Psoas muscle (tissue), 8 donors: ENCODE measurements at regions of chr6 and their contacts with region 1.

Region 1: GRCh38 chr6:26196846-26197648 is 109.8 kb downstream of the HFE start:
- DNase-seq: peak; percentile 55 to 66
- ATAC-seq: peak; percentile 31 to 63 (median 48)
- H3K4me3 ChIP-seq: peak overlapping the region; percentile 67
- H3K27ac ChIP-seq: peak overlapping the region; percentile 76
- H3K4me1 ChIP-seq: peaks cover 8% of the 10 kb centered on the region
- H3K27me3 ChIP-seq: peaks cover 0 to 94% (median 32%) of the 10 kb centered on the region in 3 donors
- CTCF ChIP-seq: no peak

Region 2: GRCh38 chr6:26234421-26235296 is 37.6 kb after region 1 on chr6:
- intact Hi-C with region 1: loop called in 1 of 2 experiments (anchors 5 kb)
- DNase-seq: peak in 1 of 2 donors; percentile 64
- ATAC-seq: peak; percentile 55 to 67 (median 58)
- H3K4me3 ChIP-seq: peak overlapping the region; percentile 64
- H3K27ac ChIP-seq: peak overlapping the region; percentile 51
- H3K4me1 ChIP-seq: peaks cover 19% of the 10 kb centered on the region
- H3K27me3 ChIP-seq: peaks cover 0 to 94% (median 18%) of the 10 kb centered on the region in 3 donors
- CTCF ChIP-seq: no peak

Region 3: GRCh38 chr6:26270903-26271667 is 74.0 kb after region 1 on chr6:
- intact Hi-C with region 1: loop called in 1 of 2 experiments (anchors 5 kb)
- DNase-seq: peak in 1 of 2 donors; percentile 63
- ATAC-seq: peak; percentile 28 to 71 (median 64)
- H3K4me3 ChIP-seq: peak overlapping the region; percentile 58
- H3K27ac ChIP-seq: no peak overlapping the region
- H3K4me1 ChIP-seq: peaks cover 8% of the 10 kb centered on the region
- H3K27me3 ChIP-seq: peaks cover 0 to 67% (median 28%) of the 10 kb centered on the region in 3 donors
- CTCF ChIP-seq: no peak

Region 4: GRCh38 chr6:26327450-26328264 is 130.6 kb after region 1 on chr6:
- intact Hi-C with region 1: no loop called
- DNase-seq: no peak
- ATAC-seq: peak in 3 of 4 donors; percentile 20 to 69 (median 67)
- H3K4me3 ChIP-seq: no peak overlapping the region
- H3K27ac ChIP-seq: no peak overlapping the region
- H3K4me1 ChIP-seq: peaks cover 6% of the 10 kb centered on the region
- H3K27me3 ChIP-seq: peaks cover 14 to 50% (median 25%) of the 10 kb centered on the region in 3 donors
- CTCF ChIP-seq: no peak

Region 5: GRCh38 chr6:27146706-27147505 is 949.9 kb after region 1 on chr6:
- intact Hi-C with region 1: no loop called
- DNase-seq: peak; percentile 72 to 81
- ATAC-seq: peak; percentile 88 to 95 (median 94)
- H3K4me3 ChIP-seq: peak overlapping the region; percentile 69
- H3K27ac ChIP-seq: peak overlapping the region; percentile 77
- H3K4me1 ChIP-seq: no peaks in the 10 kb centered on the region
- H3K27me3 ChIP-seq: peaks cover 0 to 14% (median 3%) of the 10 kb centered on the region in 3 donors
- CTCF ChIP-seq: no peak